AG04450 (cell line): ENCODE measurements at regions of chr5 and their contacts with region 1.

Region 1: DNA sequence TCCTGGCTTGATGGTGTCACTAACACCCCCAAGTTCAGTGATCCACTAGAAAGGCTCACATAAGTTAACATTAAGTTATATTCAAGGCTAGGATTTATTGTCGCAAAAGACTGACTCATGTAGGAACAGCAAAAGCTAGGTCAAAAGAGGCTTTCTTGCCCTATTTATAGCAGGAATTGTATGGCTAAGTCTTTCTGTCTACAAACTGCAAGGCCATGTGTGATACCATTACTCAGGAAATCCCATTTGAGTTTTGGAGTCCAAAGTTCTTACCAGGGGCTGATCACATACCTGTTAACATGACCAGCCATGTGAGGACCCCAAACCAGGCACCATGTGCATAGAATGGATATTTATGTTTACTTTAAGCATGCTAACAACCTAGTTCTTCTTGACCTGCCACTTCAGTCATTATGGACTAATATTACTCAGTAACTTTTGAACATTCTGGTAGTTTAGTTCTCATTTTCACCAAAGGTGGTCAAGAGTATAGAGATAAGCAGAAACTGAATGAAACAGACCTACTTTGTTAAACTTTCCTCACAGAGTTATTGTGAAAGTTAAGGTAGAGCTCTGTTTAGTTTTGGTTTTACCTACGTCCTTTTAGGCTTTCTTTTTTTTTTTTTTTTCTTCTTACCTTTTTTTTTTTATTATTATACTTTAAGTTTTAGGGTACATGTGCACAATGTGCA is 281.1 kb downstream of the FER start:
- DNase-seq: no peak
- H3K4me3 ChIP-seq: no peak overlapping the region
- H3K27ac ChIP-seq: no peak overlapping the region
- H3K27me3 ChIP-seq: no peaks in the 10 kb centered on the region
- CTCF ChIP-seq: no peak

Region 2: GRCh38 chr5:108966910-108967309 is 61.8 kb before region 1 on chr5:
- CTCF ChIA-PET with region 1: interaction called, 11 read pairs
- POLR2A ChIA-PET with region 1: no interaction called
- DNase-seq: no peak
- H3K4me3 ChIP-seq: no peak overlapping the region
- H3K27ac ChIP-seq: no peak overlapping the region
- H3K27me3 ChIP-seq: no peaks in the 10 kb centered on the region
- CTCF ChIP-seq: no peak